ENCODE measurements at regions of chr9 and their contacts with region 1.

Region 1: DNA sequence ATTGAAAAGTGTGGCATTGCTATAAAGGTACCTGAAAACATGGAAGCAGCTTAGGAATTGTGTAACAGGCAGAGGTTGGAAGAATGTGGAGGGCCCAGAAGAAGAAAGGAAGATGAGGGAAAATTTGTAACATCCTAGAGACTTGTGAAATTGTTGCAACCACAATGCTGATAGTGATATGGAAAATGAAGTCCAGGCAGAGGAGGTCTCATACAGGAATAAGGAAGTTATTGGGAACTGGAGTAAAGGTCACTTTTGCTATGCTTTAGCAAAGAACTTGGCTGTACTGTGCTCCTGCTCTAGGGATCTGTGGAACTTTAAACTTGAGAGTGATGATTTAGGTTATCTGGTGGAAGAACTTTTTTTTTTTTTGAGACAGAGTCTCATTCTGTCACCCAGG is 43.5 kb downstream of the PTPDC1 start:
- DNase-seq: no peak
- ATAC-seq: no peak
- H3K4me3 ChIP-seq: no peak overlapping the region
- H3K27ac ChIP-seq: no peak overlapping the region
- H3K4me1 ChIP-seq: no peaks in the 10 kb centered on the region
- CTCF ChIP-seq: no peak
- EP300 ChIP-seq: no peak
- POLR2A ChIP-seq: no peak
- RAD21 ChIP-seq: no peak

Region 2: GRCh38 chr9:94139672-94140417 is 12.0 kb after region 1 on chr9:
- CTCF ChIA-PET with region 1: interaction called, 4 read pairs
- POLR2A ChIA-PET with region 1: interaction called, 13 read pairs
- DNase-seq: peak; percentile 71 to 72
- ATAC-seq: peak; percentile 84 to 88
- H3K4me3 ChIP-seq: no peak overlapping the region
- H3K27ac ChIP-seq: peak overlapping the region; percentile 77 to 88
- H3K4me1 ChIP-seq: peaks cover 26% of the 10 kb centered on the region
- CTCF ChIP-seq: no peak
- EP300 ChIP-seq: no peak
- POLR2A ChIP-seq: no peak
- RAD21 ChIP-seq: no peak

Measured in A549 (cell line).